Esophagus muscularis mucosa (tissue), 4 donors: ENCODE measurements at regions of chr3 and their contacts with region 1.

Region 1: DNA sequence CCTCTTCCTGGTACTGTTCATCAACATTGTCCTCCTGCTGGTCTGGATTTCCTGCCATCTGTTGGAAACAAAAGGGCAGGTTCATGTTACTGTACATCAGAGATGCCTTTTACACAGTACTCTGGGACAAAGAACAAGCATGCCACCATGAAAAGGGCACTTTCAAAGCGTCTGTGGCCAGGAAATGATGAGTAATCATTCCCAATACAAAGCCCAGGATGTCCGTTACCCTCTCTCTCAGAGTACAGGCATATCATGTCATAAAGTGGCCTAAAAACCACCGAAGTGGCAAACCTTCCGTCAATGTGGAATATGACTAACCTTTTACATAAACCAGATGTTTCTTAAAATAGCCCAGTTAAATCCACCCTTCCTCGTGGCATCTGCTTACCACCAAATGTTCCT is 71.2 kb downstream of the GOLIM4 start:
- DNase-seq: no peak
- H3K4me3 ChIP-seq: no peak overlapping the region
- H3K27ac ChIP-seq: peak overlapping the region; percentile 27 to 73 (median 48)
- H3K4me1 ChIP-seq: peaks cover 13 to 48% (median 41%) of the 10 kb centered on the region in 4 donors
- H3K27me3 ChIP-seq: no peaks in the 10 kb centered on the region
- CTCF ChIP-seq: no peak
- EP300 ChIP-seq: peak; percentile 27
- POLR2A ChIP-seq: no peak

Region 2: DNA sequence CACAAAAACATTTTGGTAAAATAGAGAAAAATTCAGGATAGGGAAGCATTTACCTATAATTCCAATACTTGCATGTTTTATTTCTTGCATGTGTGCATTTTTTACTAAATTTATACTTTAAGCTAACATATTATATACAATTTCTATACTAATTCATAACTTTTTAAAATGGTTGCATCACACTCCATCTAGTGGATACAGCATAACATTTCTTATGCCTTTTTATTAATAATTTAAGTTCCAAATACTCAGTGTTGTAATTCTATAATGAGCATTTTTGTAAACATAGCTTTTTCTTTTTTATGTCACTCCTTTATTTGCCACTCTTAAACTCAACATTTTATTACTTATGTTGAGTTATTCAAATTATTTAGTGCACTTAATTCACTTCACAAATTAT is 1122.2 kb before region 1 on chr3:
- intact Hi-C with region 1: no loop called
- DNase-seq: no peak
- H3K4me3 ChIP-seq: no peak overlapping the region
- H3K27ac ChIP-seq: no peak overlapping the region
- H3K4me1 ChIP-seq: no peaks in the 10 kb centered on the region
- H3K27me3 ChIP-seq: no peaks in the 10 kb centered on the region
- CTCF ChIP-seq: no peak
- EP300 ChIP-seq: no peak
- POLR2A ChIP-seq: no peak

Region 3: GRCh38 chr3:167929968-167930367 is 94.6 kb before region 1 on chr3:
- intact Hi-C with region 1: loop called (anchors 10 kb)
- DNase-seq: no peak
- H3K4me3 ChIP-seq: no peak overlapping the region
- H3K27ac ChIP-seq: peak overlapping the region in 2 of 4 donors; percentile 24 to 32
- H3K4me1 ChIP-seq: peaks cover 4 to 14% (median 12%) of the 10 kb centered on the region in 4 donors
- H3K27me3 ChIP-seq: no peaks in the 10 kb centered on the region
- CTCF ChIP-seq: no peak
- EP300 ChIP-seq: no peak
- POLR2A ChIP-seq: no peak